ENCODE measurements at regions of chr2 and their contacts with region 1.

Region 1: GRCh38 chr2:37414470-37414949 is 70.1 kb downstream of the QPCT start:
- DNase-seq: no peak
- H3K4me3 ChIP-seq: no peak overlapping the region
- H3K27ac ChIP-seq: no peak overlapping the region
- H3K4me1 ChIP-seq: no peaks in the 10 kb centered on the region
- H3K27me3 ChIP-seq: no peaks in the 10 kb centered on the region
- CTCF ChIP-seq: peak; percentile 39 to 93 (median 92)
- EP300 ChIP-seq: no peak
- POLR2A ChIP-seq: no peak

Region 2: GRCh38 chr2:37456479-37456878 is 42.0 kb after region 1 on chr2:
- intact Hi-C with region 1: no loop called
- DNase-seq: no peak
- H3K4me3 ChIP-seq: no peak overlapping the region
- H3K27ac ChIP-seq: no peak overlapping the region
- H3K4me1 ChIP-seq: peaks cover 11% of the 10 kb centered on the region
- H3K27me3 ChIP-seq: no peaks in the 10 kb centered on the region
- CTCF ChIP-seq: no peak
- EP300 ChIP-seq: no peak
- POLR2A ChIP-seq: no peak

Region 3: DNA sequence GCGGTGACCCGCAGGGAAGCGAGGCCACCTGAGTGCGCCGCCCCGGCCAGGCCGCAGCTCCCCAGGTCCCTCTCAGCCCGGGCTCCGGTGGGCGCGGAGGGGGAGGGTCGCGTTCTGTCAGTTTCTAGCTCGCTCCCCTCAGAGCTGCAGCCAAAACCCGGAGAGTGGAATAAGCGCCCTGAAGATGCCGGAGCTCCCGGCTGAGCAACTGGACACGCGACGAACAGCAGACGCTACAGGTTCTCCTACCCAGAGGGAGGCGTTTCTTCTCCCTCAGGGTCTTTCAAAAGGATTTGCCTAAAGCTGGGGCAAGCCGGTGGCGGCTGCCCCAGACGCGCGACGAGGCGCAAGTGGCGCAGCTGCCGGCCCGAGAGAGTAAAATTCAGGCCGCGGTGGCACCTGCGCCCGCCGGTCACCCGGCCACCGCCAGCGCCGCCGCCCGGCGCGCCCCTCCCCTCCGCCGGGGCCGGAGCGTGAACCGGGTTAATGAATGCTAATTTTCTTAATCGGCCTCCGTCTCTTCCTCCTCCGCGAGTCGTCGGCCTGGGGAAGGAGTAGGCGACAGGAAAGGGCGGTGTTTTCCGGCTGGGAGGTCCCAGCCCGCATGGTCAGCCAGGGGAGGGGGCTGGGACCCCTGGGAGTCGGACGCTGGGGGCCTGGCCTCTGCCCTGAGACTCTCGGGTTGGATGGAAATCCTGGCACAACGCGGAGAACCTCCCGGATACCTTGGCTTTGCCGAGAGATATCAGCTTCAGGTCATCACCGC is 257.8 kb after region 1 on chr2:
- intact Hi-C with region 1: loop called in 1 of 4 experiments (anchors 5 kb)
- DNase-seq: peak; percentile 71 to 83 (median 74)
- H3K4me3 ChIP-seq: peak overlapping the region; percentile 96
- H3K27ac ChIP-seq: peak overlapping the region; percentile 73 to 74
- H3K4me1 ChIP-seq: no peaks in the 10 kb centered on the region
- H3K27me3 ChIP-seq: no peaks in the 10 kb centered on the region
- CTCF ChIP-seq: no peak
- EP300 ChIP-seq: no peak
- POLR2A ChIP-seq: no peak

Region 4: DNA sequence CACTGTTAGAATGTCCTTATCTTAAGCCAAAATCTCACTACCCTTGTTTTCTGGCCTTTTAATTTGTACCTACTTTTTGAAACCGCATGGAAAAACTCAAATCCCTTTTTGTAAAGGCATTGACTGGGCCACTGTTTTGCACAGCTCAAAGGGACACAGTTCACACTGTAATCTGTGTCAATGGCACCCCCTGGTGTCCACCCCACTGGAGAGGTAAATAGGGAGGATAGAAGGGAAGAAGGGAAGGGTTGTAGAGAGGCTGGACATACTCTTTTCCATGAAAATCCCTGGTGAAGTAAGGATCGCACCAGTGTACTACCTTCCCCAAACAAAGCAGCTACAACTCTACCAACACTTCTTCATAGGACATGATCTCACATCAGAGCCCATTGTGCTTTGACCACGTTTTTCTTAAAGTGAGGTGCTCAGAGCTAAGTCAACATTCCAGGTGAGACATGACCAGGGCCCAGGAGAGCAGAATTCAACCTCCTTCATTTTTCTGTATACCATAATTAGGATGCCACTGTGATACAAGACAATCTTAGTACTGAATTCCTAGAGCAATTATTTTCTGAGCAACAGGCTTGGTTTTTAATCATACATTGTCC is 418.2 kb after region 1 on chr2:
- intact Hi-C with region 1: loop called (anchors 2 to 5 kb)
- DNase-seq: peak; percentile 83 to 92 (median 89)
- H3K4me3 ChIP-seq: no peak overlapping the region
- H3K27ac ChIP-seq: no peak overlapping the region
- H3K4me1 ChIP-seq: peaks cover 11% of the 10 kb centered on the region
- H3K27me3 ChIP-seq: no peaks in the 10 kb centered on the region
- CTCF ChIP-seq: peak; percentile 45 to 85 (median 78)
- EP300 ChIP-seq: no peak
- POLR2A ChIP-seq: peak; percentile 24

Region 5: DNA sequence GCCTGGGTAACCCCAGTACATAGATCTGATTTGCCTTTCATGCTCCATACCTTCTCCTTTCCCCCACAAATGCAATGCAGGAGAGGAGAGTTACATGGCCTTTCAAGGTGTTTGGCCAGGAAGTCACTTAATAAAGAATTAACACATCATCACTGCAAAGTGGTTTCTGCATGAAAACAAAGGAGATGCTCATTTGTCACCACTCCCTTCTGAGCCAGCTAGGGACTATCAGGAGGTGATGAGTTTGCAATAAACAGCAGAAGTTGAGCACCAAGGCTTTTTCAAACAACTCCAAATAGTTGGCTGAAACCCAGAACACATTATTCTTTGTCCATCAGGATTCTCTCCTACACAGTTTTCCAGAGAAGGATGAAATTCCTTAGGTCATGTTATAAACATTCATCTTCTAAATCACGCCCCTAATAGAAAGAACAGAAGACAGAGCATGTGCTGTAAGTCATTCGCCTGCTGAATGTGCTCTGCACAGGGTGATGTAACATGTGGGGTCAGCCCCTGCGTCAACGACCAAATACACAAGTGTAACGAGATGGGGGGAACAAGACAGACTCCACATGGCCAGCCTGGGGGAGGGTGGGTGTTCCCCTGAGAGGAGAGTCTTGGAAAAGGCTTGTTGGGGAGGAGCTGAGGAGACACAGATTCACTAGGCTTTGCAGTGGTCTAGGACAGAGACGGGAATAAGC is 423.3 kb after region 1 on chr2:
- intact Hi-C with region 1: loop called in 3 of 4 experiments (anchors 2 to 5 kb)
- DNase-seq: peak in 1 of 5 donors; percentile 65
- H3K4me3 ChIP-seq: no peak overlapping the region
- H3K27ac ChIP-seq: no peak overlapping the region
- H3K4me1 ChIP-seq: no peaks in the 10 kb centered on the region
- H3K27me3 ChIP-seq: no peaks in the 10 kb centered on the region
- CTCF ChIP-seq: no peak
- EP300 ChIP-seq: no peak
- POLR2A ChIP-seq: no peak

Region 6: GRCh38 chr2:37877457-37878315 is 463.2 kb after region 1 on chr2:
- intact Hi-C with region 1: loop called in 2 of 4 experiments (anchors 2 to 10 kb)
- DNase-seq: peak in 1 of 5 donors; percentile 32
- H3K4me3 ChIP-seq: no peak overlapping the region
- H3K27ac ChIP-seq: no peak overlapping the region
- H3K4me1 ChIP-seq: no peaks in the 10 kb centered on the region
- H3K27me3 ChIP-seq: no peaks in the 10 kb centered on the region
- CTCF ChIP-seq: peak; percentile 59 to 77 (median 73)
- EP300 ChIP-seq: no peak
- POLR2A ChIP-seq: no peak

Measured in ovary (tissue), 10 donors.